Activated CD8-positive, alpha-beta T cell treated with anti-CD3 and anti-CD28 coated beads, Interleukin-2, amount 10 ng/mL, durations not matched to agents 7 days and 5 days (primary cell): ENCODE measurements at regions of chr10 and their contacts with region 1.

Region 1: DNA sequence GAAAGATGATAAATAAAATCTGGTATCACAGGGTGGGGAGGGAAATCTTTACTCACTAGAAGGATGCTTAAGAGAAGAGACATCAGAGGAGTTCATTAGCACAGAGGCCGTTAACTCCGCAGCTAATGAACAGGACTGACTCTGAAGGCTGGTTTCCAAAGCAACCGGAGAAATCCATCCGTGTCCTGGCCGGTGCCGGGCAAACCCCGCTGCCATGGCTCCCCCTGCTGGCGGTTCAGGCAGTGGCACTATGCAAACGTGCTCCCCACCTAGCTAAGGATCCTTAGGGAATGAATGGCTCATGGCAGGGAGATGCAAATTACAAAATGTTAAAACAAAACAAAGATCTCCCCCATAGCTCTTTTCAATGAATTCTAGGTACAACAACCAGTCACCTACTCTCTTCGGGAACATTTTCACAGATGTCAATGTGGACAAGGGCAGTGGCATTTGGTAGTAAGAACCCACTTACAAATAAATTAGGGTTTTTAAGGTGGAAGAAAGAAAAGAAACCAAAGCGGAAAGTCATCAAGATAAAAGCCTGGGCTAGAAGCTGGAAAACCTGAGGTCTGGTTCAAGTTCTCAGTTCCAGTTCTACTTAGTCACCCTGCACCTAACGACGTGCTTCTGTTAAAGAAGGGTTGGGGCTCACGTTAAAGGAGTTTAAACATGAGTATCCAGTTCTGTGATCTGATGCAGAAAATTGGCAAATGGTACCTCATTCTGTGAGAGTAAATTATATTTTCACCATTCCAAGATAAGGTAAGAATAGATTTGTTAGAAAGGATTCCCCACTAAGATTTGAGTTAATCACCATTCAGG is 138.2 kb downstream of the SVIL start:
- DNase-seq: peak; percentile 73
- ATAC-seq: peak; percentile 73
- H3K4me3 Mint-ChIP-seq: no peak overlapping the region
- H3K27ac Mint-ChIP-seq: no peak overlapping the region
- H3K4me1 Mint-ChIP-seq: no peaks in the 10 kb centered on the region
- H3K27me3 Mint-ChIP-seq: no peaks in the 10 kb centered on the region

Region 2: GRCh38 chr10:29409241-29410057 is 87.1 kb before region 1 on chr10:
- CTCF ChIA-PET with region 1: interaction called, 12 read pairs
- POLR2A ChIA-PET with region 1: no interaction called
- DNase-seq: peak; percentile 55
- ATAC-seq: peak; percentile 87
- H3K4me3 Mint-ChIP-seq: peak overlapping the region; percentile 90
- H3K27ac Mint-ChIP-seq: peak overlapping the region; percentile 87
- H3K4me1 Mint-ChIP-seq: peaks cover 27% of the 10 kb centered on the region
- H3K27me3 Mint-ChIP-seq: no peaks in the 10 kb centered on the region

Region 3: GRCh38 chr10:29455095-29455494 is 41.5 kb before region 1 on chr10:
- CTCF ChIA-PET with region 1: interaction called, 10 read pairs
- POLR2A ChIA-PET with region 1: no interaction called
- DNase-seq: no peak
- ATAC-seq: no peak
- H3K4me3 Mint-ChIP-seq: no peak overlapping the region
- H3K27ac Mint-ChIP-seq: no peak overlapping the region
- H3K4me1 Mint-ChIP-seq: no peaks in the 10 kb centered on the region
- H3K27me3 Mint-ChIP-seq: no peaks in the 10 kb centered on the region

Region 4: DNA sequence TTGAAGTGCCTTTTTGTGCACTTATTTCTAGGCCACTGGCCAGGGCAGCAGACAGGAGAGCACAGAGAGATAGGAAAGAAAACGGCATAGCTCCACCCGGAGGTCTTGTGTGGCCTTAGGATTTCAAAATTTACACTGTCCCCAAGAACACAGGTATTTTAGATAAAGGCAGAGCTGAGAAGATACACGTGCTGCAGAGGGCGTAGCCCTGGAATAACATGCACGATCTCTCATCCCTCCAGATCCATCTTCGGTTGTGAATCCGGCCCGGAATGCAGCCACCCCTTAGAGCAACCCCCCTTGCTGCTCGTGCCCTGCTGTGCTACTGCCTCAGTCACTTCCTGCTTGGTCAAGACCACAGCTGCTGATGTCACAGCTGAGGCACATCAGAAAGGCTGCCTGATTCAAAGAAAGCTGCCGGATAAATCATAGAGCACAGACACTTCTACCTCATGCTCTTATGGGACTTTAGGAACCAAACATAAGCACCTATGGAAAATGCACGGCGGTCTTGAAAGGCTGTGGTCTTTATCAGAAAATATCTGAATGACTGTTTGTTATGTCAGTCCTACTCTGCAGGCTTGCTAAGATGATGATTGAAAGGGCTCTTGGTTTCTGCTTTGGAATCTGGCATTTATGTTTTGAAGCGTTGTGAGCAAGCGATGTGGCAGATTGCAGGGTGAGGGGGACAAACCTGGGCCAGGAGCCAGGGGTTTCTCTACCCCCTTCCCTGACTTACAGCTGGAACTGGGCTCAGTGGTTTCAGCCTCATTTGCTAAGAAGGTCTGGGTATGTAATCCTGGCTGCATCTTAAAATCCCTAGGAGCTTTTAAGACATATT is 13.7 kb before region 1 on chr10:
- CTCF ChIA-PET with region 1: interaction called, 35 read pairs
- POLR2A ChIA-PET with region 1: no interaction called
- DNase-seq: peak; percentile 74
- ATAC-seq: peak; percentile 90
- H3K4me3 Mint-ChIP-seq: peak overlapping the region; percentile 48
- H3K27ac Mint-ChIP-seq: peak overlapping the region; percentile 84
- H3K4me1 Mint-ChIP-seq: peaks cover 69% of the 10 kb centered on the region
- H3K27me3 Mint-ChIP-seq: no peaks in the 10 kb centered on the region

Region 5: GRCh38 chr10:29725133-29725720 is 228.7 kb after region 1 on chr10:
- CTCF ChIA-PET with region 1: no interaction called
- POLR2A ChIA-PET with region 1: no interaction called
- DNase-seq: no peak
- ATAC-seq: no peak
- H3K4me3 Mint-ChIP-seq: no peak overlapping the region
- H3K27ac Mint-ChIP-seq: no peak overlapping the region
- H3K4me1 Mint-ChIP-seq: no peaks in the 10 kb centered on the region
- H3K27me3 Mint-ChIP-seq: no peaks in the 10 kb centered on the region